ENCODE measurements at regions of chr1 and their contacts with region 1.

Region 1: GRCh38 chr1:212077051-212077450 is 41.5 kb downstream of the DTL start:
- DNase-seq: no peak

Region 2: DNA sequence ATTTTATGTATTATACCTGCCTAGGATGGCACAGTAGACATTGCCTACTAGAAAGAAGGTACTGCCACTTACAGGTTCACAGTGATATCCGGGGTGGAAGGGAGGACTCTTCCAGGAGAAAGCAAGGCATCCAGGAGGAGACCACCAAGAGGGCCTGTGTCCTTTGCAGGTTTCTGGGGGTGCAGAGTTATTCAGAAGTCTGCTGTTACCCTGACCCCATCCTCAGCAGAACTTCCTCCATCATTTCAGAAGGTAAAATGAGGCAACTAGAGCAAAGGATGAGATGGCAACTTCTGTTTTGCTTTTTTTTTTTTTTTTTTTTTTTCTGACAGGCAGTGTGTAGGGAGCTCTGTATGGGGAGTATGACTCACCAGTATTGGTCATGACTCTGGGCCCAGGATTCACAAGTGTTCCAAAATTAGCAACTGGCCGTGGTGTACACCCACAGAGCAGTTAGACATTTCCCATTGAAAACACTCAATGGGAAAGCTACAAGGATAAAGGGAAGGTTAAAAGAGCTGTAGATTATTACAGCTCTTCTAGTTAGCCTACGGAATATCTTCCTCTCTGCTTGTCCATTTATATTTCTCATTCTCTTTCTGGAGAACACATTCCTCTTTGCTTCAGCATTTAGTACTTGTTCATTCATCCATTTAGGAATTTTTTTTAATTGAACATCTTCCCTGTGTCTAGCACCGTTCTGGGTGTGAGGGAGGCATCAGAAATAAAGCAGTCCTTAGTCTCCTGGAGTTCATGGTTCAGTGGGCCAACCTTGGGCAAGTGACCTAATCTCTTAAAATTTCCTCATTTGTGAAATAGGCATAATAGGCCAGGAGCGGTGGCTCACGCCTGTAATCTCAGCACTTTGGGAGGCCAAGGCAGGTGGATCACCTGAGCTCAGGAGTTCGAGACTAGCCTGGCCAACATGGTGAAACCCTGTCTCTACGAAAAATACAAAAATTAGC is 157.7 kb after region 1 on chr1:
- intact Hi-C with region 1: loop called (anchors 5 kb)
- DNase-seq: no peak